Heart right ventricle (tissue), 16 donors: ENCODE measurements at regions of chr14 and their contacts with region 1.

Region 1: DNA sequence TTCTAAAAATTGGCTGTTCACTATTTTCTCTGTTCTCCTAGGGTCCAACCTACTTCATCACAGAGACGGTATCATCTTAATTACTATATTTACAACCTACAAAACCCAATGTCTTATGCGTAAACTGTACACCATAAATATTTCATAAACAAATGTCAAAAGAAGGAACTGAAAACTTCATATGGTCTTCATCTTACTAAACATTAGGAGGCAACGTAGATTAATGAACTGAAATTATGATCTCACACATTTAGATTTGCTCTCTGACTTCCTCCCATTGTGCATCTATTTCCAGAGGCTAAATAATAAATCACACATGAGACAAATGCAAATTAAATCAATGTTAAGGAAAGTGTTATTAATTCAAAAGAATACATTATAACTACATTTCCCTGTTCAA is 1850.6 kb upstream of the SEL1L start:
- DNase-seq: no peak
- ATAC-seq: no peak
- H3K4me3 ChIP-seq: no peak overlapping the region
- H3K27ac ChIP-seq: no peak overlapping the region
- H3K4me1 ChIP-seq: no peaks in the 10 kb centered on the region
- H3K27me3 ChIP-seq: no peaks in the 10 kb centered on the region
- CTCF ChIP-seq: no peak

Region 2: DNA sequence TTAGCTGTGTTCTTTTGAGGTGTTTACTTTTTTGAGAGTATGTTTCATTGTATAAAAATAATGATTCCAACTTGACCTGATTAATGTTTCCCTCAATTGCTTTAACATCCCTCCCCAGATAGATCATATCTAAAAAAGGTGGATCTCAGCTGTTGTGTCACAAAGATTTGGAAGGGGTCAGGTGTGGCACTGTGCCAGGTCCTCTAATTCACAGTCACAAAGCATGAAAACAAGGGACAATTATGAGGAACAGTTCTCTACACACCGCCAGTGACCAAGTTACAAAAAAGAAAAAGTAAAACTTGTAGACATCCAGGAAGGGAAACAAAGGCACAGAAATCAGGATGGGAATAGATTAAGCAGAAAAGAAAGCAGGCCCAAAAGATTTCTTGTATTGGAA is 28.3 kb after region 1 on chr14:
- intact Hi-C with region 1: loop called in 1 of 10 experiments (anchors 2 kb)
- DNase-seq: no peak
- ATAC-seq: no peak
- H3K4me3 ChIP-seq: no peak overlapping the region
- H3K27ac ChIP-seq: no peak overlapping the region
- H3K4me1 ChIP-seq: no peaks in the 10 kb centered on the region
- H3K27me3 ChIP-seq: no peaks in the 10 kb centered on the region
- CTCF ChIP-seq: no peak